CD14-positive monocyte (primary cell): ENCODE measurements at regions of chr3 and their contacts with region 1.

Region 1: GRCh38 chr3:150495563-150496168 is 50.6 kb downstream of the SERP1 start:
- DNase-seq: peak; percentile 29 to 59 (median 45)
- H3K4me3 ChIP-seq: no peak overlapping the region
- H3K4me3 Mint-ChIP-seq: peak overlapping the region in 1 of 2 donors; percentile 15
- H3K27ac ChIP-seq: no peak overlapping the region
- H3K27ac Mint-ChIP-seq: peak overlapping the region in 1 of 7 donors; percentile 53
- H3K4me1 ChIP-seq: peaks cover 10 to 15% of the 10 kb centered on the region in 2 donors
- H3K4me1 Mint-ChIP-seq: peaks cover 16% of the 10 kb centered on the region
- H3K27me3 ChIP-seq: no peaks in the 10 kb centered on the region
- H3K27me3 Mint-ChIP-seq: peaks cover 0 to 3% (median 0%) of the 10 kb centered on the region in 3 donors
- CTCF ChIP-seq: peak; percentile 93

Region 2: GRCh38 chr3:150227839-150228238 is 267.8 kb before region 1 on chr3:
- intact Hi-C with region 1: loop called (anchors 5 to 10 kb)
- DNase-seq: peak; percentile 17 to 43 (median 32)
- H3K4me3 ChIP-seq: no peak overlapping the region
- H3K4me3 Mint-ChIP-seq: no peak overlapping the region
- H3K27ac ChIP-seq: no peak overlapping the region
- H3K27ac Mint-ChIP-seq: no peak overlapping the region
- H3K4me1 ChIP-seq: peaks cover 3 to 6% of the 10 kb centered on the region in 2 donors
- H3K4me1 Mint-ChIP-seq: peaks cover 5% of the 10 kb centered on the region
- H3K27me3 ChIP-seq: peaks cover 2 to 4% of the 10 kb centered on the region in 2 donors
- H3K27me3 Mint-ChIP-seq: peaks cover 1 to 5% (median 5%) of the 10 kb centered on the region in 3 donors
- CTCF ChIP-seq: peak; percentile 73

Region 3: GRCh38 chr3:150286390-150287147 is 209.1 kb before region 1 on chr3:
- intact Hi-C with region 1: loop called in 1 of 2 experiments (anchors 5 kb)
- DNase-seq: peak; percentile 9 to 47 (median 31)
- H3K4me3 ChIP-seq: no peak overlapping the region
- H3K4me3 Mint-ChIP-seq: no peak overlapping the region
- H3K27ac ChIP-seq: no peak overlapping the region
- H3K27ac Mint-ChIP-seq: no peak overlapping the region
- H3K4me1 ChIP-seq: no peaks in the 10 kb centered on the region
- H3K4me1 Mint-ChIP-seq: no peaks in the 10 kb centered on the region
- H3K27me3 ChIP-seq: no peaks in the 10 kb centered on the region
- H3K27me3 Mint-ChIP-seq: peaks cover 0 to 5% (median 0%) of the 10 kb centered on the region in 3 donors
- CTCF ChIP-seq: peak; percentile 67